ENCODE measurements at regions of chr13 and their contacts with region 1.

Region 1: DNA sequence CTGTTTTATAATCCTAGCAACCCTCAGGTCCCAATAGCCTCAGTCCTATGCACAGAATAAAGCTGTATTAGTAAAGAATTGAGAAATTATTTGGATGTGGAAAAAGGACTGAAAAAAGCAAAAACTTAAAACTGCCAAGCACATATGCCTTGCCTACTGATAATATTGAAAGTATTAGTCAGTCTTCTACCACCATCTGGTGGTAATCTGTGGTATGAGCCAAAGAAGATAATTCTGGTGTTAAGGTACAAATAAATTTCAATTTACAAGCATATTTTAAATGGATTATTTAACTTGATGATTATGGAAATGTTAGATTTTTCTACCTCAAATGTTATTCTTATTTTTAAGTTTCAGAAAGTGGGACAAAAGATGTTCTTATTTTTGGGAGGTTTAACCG is 460.3 kb upstream of the KLHL1 start:
- DNase-seq: peak; percentile 68
- H3K4me3 ChIP-seq: no peak overlapping the region
- H3K27ac ChIP-seq: no peak overlapping the region
- H3K4me1 ChIP-seq: no peaks in the 10 kb centered on the region
- H3K27me3 ChIP-seq: no peaks in the 10 kb centered on the region
- CTCF ChIP-seq: peak; percentile 35 to 48
- POLR2A ChIP-seq: no peak

Region 2: GRCh38 chr13:70098669-70099068 is 469.9 kb before region 1 on chr13:
- CTCF ChIA-PET with region 1: no interaction called
- POLR2A ChIA-PET with region 1: no interaction called
- dilution Hi-C with region 1: no loop called
- intact Hi-C with region 1: loop called (anchors 5 kb)
- DNase-seq: peak; percentile 14
- H3K4me3 ChIP-seq: no peak overlapping the region
- H3K27ac ChIP-seq: no peak overlapping the region
- H3K4me1 ChIP-seq: no peaks in the 10 kb centered on the region
- H3K27me3 ChIP-seq: no peaks in the 10 kb centered on the region
- CTCF ChIP-seq: peak in 1 of 2 donors; percentile 28
- POLR2A ChIP-seq: no peak

Region 3: GRCh38 chr13:70339738-70340137 is 228.8 kb before region 1 on chr13:
- CTCF ChIA-PET with region 1: no interaction called
- POLR2A ChIA-PET with region 1: no interaction called
- dilution Hi-C with region 1: no loop called
- intact Hi-C with region 1: loop called (anchors 1 kb)
- DNase-seq: peak; percentile 11
- H3K4me3 ChIP-seq: no peak overlapping the region
- H3K27ac ChIP-seq: no peak overlapping the region
- H3K4me1 ChIP-seq: no peaks in the 10 kb centered on the region
- H3K27me3 ChIP-seq: no peaks in the 10 kb centered on the region
- CTCF ChIP-seq: peak; percentile 9 to 57
- POLR2A ChIP-seq: no peak